BJ (cell line): ENCODE measurements at regions of chr15 and their contacts with region 1.

Region 1: GRCh38 chr15:88657326-88658069 is 18.7 kb downstream of the ISG20 start:
- DNase-seq: no peak
- H3K4me3 ChIP-seq: no peak overlapping the region
- H3K27me3 ChIP-seq: 0 out of 2 replicates have a peak, but pooled peaks cover 1% of the 10 kb centered on the region
- CTCF ChIP-seq: peak; percentile 92

Region 2: DNA sequence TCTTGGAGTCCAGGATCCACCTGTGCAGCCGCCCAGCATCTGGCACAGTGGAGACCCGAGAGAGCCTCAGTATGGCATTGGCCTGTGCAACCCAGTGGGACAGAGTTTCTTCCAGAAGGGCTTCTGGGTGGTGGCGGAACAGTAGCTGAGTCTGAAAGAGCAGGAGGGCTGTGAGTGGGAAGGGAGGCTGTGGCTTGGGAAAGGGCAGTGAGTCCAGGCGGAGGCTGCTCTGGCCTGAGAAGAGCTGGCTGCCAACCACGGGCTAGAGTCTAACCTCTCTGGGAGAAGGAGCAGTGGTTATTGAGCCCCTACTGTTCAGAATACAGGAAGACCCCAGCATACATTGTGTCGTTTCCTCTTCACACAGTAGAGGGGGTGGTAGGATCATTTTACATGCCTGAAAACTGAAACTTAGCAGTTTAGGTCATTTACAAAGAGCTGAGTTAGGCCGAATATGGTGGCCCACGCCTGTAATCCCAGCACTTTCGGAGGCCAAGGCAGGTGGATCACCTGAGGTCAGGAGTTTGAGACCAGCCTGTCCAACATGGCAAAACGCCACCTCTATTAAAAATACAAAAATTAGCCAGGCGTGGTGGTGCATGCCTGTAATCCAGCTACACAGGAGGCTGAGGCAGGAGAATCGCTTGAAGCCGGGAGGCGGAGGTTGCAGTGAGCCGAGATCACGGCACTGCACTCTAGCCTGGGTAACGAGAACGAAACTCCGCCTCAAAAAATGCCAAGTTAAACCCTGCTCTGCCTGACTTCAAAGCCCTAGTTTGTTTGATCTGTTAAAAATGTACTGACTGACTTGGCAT is 33.1 kb before region 1 on chr15:
- CTCF ChIA-PET with region 1: interaction called, 14 read pairs
- POLR2A ChIA-PET with region 1: no interaction called
- DNase-seq: no peak
- H3K4me3 ChIP-seq: no peak overlapping the region
- H3K27me3 ChIP-seq: no peaks in the 10 kb centered on the region
- CTCF ChIP-seq: peak; percentile 51

Region 3: GRCh38 chr15:88638626-88639372 is 18.7 kb before region 1 on chr15 and contains the start of gene ISG20:
- CTCF ChIA-PET with region 1: interaction called, 14 read pairs
- POLR2A ChIA-PET with region 1: no interaction called
- DNase-seq: peak; percentile 80
- H3K4me3 ChIP-seq: peak within 1 kb of the TSS; percentile 46
- H3K27me3 ChIP-seq: no peaks in the 10 kb centered on the region
- CTCF ChIP-seq: peak; percentile 61
- polyA plus RNA-seq, gene ISG20: 1.8 and 4.2 TPM in 2 replicates

Region 4: DNA sequence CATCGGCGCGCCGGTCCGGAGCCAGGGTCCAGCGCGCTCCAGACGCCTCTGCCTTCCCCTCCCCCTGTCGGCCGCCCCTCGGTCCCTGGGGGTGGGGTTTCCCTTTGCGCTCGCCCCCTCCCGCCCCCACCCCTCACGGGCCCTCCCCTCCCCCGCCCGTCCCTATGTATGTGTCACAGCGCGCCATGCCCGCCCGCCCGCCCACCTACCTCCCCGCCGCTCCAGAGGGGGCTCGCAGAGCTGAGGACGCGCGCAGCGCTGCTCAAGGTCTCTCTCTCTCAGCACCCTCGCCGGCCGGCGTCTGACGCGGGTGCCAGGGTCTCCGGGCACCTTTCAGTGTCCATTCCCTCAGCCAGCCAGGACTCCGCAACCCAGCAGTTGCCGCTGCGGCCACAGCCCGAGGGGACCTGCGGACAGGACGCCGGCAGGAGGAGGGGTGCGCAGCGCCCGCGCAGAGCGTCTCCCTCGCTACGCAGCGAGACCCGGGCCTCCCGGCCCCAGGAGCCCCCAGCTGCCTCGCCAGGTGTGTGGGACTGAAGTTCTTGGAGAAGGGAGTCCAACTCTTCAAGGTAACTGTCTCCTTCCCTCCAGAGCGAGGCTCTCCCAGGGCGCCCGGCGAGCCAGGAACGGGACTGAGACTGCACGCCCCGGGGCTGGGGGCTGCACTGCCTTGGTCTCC is 145.9 kb after region 1 on chr15 and contains the start of gene ACAN:
- CTCF ChIA-PET with region 1: no interaction called
- POLR2A ChIA-PET with region 1: no interaction called
- DNase-seq: no peak
- H3K4me3 ChIP-seq: no peak within 1 kb of the TSS
- H3K27me3 ChIP-seq: peaks cover 37% of the 10 kb centered on the region
- CTCF ChIP-seq: no peak
- polyA plus RNA-seq, gene ACAN: 0.85 and 3.6 TPM in 2 replicates

Region 5: DNA sequence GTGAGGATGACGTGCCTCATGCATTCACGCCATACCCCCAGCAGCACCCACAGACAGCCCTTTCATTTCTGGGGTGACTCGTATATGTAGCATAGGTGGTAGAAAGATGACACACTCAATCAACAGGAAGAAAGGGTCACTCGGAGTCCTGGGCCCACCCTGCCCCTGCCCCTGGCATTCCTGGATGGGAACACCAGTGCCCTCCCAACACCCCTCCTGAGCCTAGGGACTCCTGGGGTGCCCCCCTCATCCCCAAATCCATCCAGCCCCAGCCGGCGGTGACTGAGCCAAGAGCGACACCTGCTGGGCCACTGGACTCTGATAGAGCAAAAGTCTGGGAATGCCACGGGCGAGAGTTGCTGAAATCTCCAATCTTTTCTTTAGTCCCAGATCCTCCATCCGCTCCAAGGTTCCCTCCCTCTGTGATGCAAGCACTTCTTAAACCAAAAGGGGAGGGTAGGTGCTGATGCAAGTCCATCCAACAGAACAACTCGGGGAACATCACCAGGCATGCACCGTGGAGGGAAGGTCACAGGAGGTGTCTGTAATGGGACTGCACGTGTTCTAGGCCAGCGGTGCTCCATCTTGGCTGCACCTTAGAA is 176.8 kb after region 1 on chr15:
- CTCF ChIA-PET with region 1: interaction called, 72 read pairs
- POLR2A ChIA-PET with region 1: no interaction called
- DNase-seq: no peak
- H3K4me3 ChIP-seq: no peak overlapping the region
- H3K27me3 ChIP-seq: no peaks in the 10 kb centered on the region
- CTCF ChIP-seq: peak; percentile 68

Region 6: GRCh38 chr15:88878720-88879184 is 221.3 kb after region 1 on chr15:
- CTCF ChIA-PET with region 1: interaction called, 12 read pairs
- POLR2A ChIA-PET with region 1: no interaction called
- DNase-seq: no peak
- H3K4me3 ChIP-seq: no peak overlapping the region
- H3K27me3 ChIP-seq: no peaks in the 10 kb centered on the region
- CTCF ChIP-seq: peak; percentile 91

Region 7: GRCh38 chr15:90214553-90215196 is 1557.2 kb after region 1 on chr15:
- CTCF ChIA-PET with region 1: no interaction called
- POLR2A ChIA-PET with region 1: no interaction called
- DNase-seq: no peak
- H3K4me3 ChIP-seq: no peak overlapping the region
- H3K27me3 ChIP-seq: no peaks in the 10 kb centered on the region
- CTCF ChIP-seq: peak; percentile 41